ENCODE measurements at regions of chr14 and their contacts with region 1.

Region 1: DNA sequence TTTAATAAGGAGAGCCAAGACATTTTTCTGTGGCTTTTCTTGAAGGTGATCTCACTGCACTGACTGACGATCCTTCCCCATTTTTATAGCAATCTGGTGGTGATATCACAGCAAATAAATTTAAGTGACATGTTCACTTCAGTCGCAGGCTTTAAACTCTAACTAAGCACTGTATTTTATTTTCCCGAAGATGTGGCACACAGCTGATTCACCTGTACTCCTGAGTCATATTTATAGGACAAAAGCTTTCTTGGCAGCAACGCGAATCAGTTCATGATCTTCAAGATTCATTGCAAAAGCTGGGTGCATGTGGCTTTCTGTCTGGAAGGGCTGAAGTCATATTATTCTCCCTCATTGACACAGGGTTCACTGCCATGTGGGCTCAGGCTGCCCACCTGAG is 79.8 kb upstream of the TUNAR start:
- DNase-seq: no peak
- H3K4me3 ChIP-seq: no peak overlapping the region
- H3K27ac ChIP-seq: no peak overlapping the region
- H3K4me1 ChIP-seq: no peaks in the 10 kb centered on the region
- H3K27me3 ChIP-seq: peaks cover 68% of the 10 kb centered on the region
- CTCF ChIP-seq: no peak

Region 2: DNA sequence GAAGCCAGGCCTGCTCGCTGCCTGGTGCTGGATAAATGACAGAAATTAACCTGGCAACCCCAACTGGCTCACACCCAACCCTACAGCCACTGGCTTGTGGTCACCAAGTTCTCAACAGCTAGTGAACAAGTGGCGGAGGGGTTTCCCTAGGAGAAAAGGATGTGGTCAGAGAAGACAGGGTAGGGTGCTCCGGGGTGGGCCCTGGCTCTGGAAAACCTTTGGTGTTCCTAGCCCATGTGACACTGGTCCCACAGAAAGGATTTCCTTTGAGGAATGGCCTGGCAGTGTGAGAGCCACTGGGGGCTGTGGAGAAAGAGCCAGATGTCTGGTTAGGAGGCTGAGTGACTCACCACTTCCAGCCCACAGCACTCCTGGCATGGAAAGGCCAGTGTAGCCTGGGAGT is 289.1 kb before region 1 on chr14:
- CTCF ChIA-PET with region 1: no interaction called
- POLR2A ChIA-PET with region 1: interaction called, 10 read pairs
- intact Hi-C with region 1: no loop called
- DNase-seq: no peak
- H3K4me3 ChIP-seq: no peak overlapping the region
- H3K27ac ChIP-seq: no peak overlapping the region
- H3K4me1 ChIP-seq: no peaks in the 10 kb centered on the region
- H3K27me3 ChIP-seq: no peaks in the 10 kb centered on the region
- CTCF ChIP-seq: no peak

Region 3: DNA sequence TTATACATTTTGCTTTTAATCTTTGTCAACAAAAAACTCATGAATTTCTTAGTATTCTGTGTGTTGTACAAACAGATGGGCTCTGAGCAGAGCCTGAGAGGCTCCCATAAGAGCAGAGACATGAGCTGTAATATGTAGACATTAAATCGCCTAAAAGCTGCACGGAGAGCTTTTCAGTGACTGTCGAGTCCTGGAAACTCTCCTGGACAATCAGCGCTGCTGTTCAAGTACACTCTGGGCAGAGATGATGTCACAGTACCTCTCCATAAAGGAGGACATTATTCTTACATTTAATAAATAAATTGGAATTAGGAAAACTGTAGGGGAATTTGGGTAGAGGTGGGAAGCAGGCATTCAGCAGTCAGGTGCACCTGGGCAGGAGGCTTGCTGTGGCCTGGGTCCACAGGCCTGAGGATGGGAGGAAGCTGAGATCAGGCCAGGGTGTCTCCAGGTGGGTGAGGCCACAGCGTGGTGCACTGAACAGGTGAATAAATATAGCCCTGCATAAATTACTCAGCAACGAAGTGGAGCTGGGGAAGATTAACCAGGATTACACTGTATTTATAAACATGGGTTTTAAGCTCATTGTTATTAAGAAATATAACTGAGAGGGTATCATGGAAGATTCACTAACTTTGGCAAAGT is 69.6 kb before region 1 on chr14:
- CTCF ChIA-PET with region 1: no interaction called
- POLR2A ChIA-PET with region 1: interaction called, 13 read pairs
- intact Hi-C with region 1: no loop called
- DNase-seq: no peak
- H3K4me3 ChIP-seq: no peak overlapping the region
- H3K27ac ChIP-seq: no peak overlapping the region
- H3K4me1 ChIP-seq: no peaks in the 10 kb centered on the region
- H3K27me3 ChIP-seq: no peaks in the 10 kb centered on the region
- CTCF ChIP-seq: no peak

Region 4: DNA sequence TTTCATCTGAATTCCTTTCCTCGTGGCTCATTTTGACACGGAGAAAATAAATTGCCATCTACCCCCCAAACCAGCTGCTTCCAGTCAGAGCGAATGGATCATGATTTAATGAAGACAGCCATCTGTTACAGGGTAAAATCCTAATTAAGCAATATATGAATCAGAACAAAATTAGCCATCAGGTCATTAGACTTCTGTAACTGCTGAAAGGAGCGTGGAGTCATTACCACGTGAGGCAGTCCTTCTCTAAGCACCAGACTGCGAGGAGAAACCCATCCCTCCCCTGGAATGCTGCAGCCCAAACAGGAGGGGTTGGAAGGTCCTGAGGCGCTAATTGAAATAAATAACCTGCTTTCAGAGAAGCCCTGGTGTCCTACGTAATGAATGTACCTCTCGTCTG is 31.7 kb before region 1 on chr14:
- CTCF ChIA-PET with region 1: no interaction called
- POLR2A ChIA-PET with region 1: no interaction called
- intact Hi-C with region 1: no loop called
- DNase-seq: no peak
- H3K4me3 ChIP-seq: no peak overlapping the region
- H3K27ac ChIP-seq: no peak overlapping the region
- H3K4me1 ChIP-seq: no peaks in the 10 kb centered on the region
- H3K27me3 ChIP-seq: peaks cover 28% of the 10 kb centered on the region
- CTCF ChIP-seq: no peak